ENCODE measurements at regions of chr6 and their contacts with region 1.

Region 1: GRCh38 chr6:90413867-90414266 is 117.2 kb upstream of the BACH2 start:
- DNase-seq: peak; percentile 96
- H3K4me3 Mint-ChIP-seq: peak overlapping the region; percentile 71
- H3K27ac Mint-ChIP-seq: peak overlapping the region; percentile 94
- H3K4me1 Mint-ChIP-seq: peaks cover 69% of the 10 kb centered on the region
- H3K27me3 Mint-ChIP-seq: no peaks in the 10 kb centered on the region

Region 2: DNA sequence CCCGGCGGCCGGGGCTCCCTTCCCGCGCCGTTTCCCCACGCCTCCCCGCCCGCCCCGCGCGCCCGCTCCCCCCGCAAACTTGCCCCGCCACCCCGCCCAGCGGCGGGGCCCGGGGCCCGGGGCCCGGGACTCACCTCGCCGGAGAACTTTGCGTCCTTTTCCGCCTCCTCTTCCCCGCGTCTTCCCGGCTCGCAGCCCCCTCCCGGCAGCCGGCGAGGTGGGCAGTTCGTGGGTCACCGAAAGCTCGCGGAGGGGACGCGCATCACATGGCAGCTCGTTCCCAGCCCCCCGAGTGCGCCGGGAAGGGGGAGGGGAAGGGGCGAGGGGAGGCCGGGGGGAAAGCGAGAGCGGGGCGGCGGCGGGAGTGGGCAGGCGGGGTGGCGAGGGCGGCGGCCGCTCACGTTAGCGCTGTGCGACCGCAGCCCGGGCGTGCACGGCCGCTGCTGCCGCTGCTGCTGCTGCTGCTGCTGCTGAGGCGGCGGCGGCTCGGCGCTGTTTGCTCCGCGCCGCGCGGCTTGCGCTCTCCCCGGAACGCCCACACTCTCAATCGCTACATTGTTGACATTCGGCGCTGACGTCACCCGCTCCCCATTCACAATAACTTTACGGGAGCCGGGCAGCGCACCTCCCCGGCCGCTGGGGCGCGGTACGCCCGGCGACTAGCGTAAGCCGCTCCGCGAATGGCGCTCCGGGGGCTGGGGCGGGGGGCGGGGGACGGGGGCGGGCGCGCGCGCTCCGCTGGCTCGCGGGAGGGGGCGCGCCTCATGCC is 117.3 kb before region 1 on chr6 and contains the start of gene BACH2:
- CTCF ChIA-PET with region 1: interaction called, 3 read pairs
- intact Hi-C with region 1: loop called (anchors 1 kb)
- DNase-seq: peak; percentile 99
- H3K4me3 Mint-ChIP-seq: peak within 1 kb of the TSS; percentile 86
- H3K27ac Mint-ChIP-seq: peak within 1 kb of the TSS; percentile 97
- H3K4me1 Mint-ChIP-seq: peaks cover 41% of the 10 kb centered on the region
- H3K27me3 Mint-ChIP-seq: peaks cover 2% of the 10 kb centered on the region
- total RNA-seq, gene BACH2: 75.1 to 77.9 TPM

Region 3: GRCh38 chr6:90319044-90319443 is 94.8 kb before region 1 on chr6:
- CTCF ChIA-PET with region 1: no interaction called
- intact Hi-C with region 1: loop called (anchors 1 kb)
- DNase-seq: peak; percentile 55
- H3K4me3 Mint-ChIP-seq: no peak overlapping the region
- H3K27ac Mint-ChIP-seq: peak overlapping the region; percentile 55
- H3K4me1 Mint-ChIP-seq: peaks cover 40% of the 10 kb centered on the region
- H3K27me3 Mint-ChIP-seq: no peaks in the 10 kb centered on the region

Region 4: DNA sequence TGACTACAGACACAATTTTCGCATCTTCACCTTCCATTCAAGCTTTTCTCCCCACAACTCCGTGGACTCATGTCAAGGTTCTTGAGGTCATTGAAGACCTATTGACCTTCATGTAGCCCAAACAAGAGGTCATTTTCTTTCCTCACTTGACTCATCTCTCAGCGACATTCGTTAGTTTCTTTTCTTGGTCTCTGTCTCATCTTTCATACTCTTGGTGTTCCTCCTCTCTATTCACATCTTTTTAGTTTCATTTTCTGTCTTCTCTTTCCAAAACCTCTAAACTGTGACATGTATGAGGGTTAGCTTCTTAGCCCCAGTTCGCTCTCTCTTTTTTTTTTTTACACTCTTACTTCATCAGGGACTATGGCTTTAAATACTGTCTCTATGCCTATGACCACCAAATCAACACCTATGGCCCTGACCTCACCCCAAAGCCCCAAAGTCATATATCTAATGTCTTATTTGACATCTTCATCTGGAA is 11.3 kb after region 1 on chr6:
- CTCF ChIA-PET with region 1: interaction called, 36 read pairs
- intact Hi-C with region 1: loop called (anchors 1 kb)
- DNase-seq: peak; percentile 46
- H3K4me3 Mint-ChIP-seq: peak overlapping the region; percentile 48
- H3K27ac Mint-ChIP-seq: peak overlapping the region; percentile 92
- H3K4me1 Mint-ChIP-seq: peaks cover 41% of the 10 kb centered on the region
- H3K27me3 Mint-ChIP-seq: no peaks in the 10 kb centered on the region

Region 5: GRCh38 chr6:90444160-90444714 is 30.4 kb after region 1 on chr6:
- CTCF ChIA-PET with region 1: interaction called, 4 read pairs
- intact Hi-C with region 1: loop called (anchors 1 kb)
- DNase-seq: no peak
- H3K4me3 Mint-ChIP-seq: peak overlapping the region; percentile 62
- H3K27ac Mint-ChIP-seq: peak overlapping the region; percentile 95
- H3K4me1 Mint-ChIP-seq: peaks cover 56% of the 10 kb centered on the region
- H3K27me3 Mint-ChIP-seq: no peaks in the 10 kb centered on the region

Region 6: DNA sequence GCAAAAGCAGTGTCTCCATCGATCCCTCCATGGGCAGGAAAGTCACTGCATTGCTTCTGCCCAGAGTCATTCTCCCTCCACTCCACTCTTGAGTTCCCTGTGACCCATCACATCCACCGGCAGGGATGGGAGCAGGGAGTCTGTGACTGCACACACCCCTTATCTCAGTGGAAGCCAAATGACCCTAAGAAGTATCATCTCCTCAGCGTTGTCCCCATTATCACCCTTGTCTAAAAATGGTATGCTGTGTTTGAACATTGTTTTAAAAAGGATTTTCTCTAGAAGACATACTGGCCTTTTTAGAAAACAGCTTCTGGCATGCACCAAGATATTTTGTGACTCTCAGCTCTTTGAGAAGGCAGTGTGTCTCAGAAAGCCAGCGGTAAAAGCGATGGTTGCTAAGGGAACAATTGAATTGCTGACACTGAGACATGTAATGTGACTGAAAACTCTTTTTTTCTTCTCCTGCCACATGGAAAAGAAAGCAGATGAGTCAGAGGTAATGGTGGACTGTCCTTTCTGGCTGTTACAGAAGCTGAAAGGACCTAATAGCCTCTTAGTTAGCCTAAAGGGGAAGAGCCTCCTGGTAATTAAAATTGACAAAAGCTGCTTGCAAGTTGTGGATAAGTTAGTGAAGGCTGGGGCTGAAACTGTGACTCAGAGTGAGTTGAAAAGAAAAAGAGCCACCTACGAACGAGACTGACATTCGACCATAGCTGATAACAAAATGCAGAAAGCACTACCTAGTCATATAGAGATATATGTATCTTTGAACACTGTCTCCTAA is 52.5 kb after region 1 on chr6:
- CTCF ChIA-PET with region 1: no interaction called
- intact Hi-C with region 1: loop called (anchors 1 kb)
- DNase-seq: peak; percentile 73
- H3K4me3 Mint-ChIP-seq: no peak overlapping the region
- H3K27ac Mint-ChIP-seq: peak overlapping the region; percentile 90
- H3K4me1 Mint-ChIP-seq: peaks cover 82% of the 10 kb centered on the region
- H3K27me3 Mint-ChIP-seq: no peaks in the 10 kb centered on the region

Region 7: DNA sequence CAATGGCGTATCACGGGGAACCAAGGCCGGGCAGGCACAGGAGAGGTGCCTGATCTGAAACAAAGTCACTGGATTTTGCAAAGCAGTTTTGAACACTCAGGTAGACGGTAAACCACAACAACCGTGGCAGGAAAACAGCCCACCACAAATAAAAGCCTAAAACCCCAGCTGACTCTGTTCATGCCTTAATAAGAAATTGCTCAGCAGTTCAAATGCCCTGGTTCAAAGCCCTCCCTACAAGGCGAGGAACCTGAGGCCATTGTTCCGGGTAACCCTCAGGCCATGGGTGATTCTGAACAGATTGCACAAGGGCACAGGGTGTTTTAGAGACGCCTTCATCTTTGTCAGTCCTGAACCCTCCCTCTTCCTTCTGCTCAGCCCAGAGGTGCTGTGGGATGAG is 58.9 kb after region 1 on chr6:
- CTCF ChIA-PET with region 1: interaction called, 10 read pairs
- intact Hi-C with region 1: loop called (anchors 1 kb)
- DNase-seq: peak; percentile 61
- H3K4me3 Mint-ChIP-seq: peak overlapping the region; percentile 48
- H3K27ac Mint-ChIP-seq: peak overlapping the region; percentile 92
- H3K4me1 Mint-ChIP-seq: peaks cover 86% of the 10 kb centered on the region
- H3K27me3 Mint-ChIP-seq: no peaks in the 10 kb centered on the region

Region 8: DNA sequence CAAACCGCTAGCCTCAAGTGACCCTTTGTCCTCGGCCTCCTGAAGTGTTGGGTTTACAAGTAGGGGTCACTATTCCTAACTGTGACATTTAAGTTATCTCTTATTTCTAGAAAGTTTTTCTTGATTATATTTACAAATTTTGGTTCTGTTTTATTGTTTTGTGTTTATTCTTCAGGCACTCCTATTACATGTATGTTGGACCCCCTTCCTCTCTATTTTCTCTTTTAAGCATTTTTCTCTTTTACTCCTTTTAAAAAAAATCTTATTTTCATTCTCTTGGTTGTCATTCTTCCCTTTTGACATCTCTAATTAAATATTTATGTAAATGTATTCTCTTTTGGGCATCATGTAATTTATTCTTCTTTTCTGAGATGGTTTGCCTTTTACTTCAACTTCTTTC is 223.5 kb after region 1 on chr6:
- CTCF ChIA-PET with region 1: no interaction called
- intact Hi-C with region 1: no loop called
- DNase-seq: no peak
- H3K4me3 Mint-ChIP-seq: no peak overlapping the region
- H3K27ac Mint-ChIP-seq: no peak overlapping the region
- H3K4me1 Mint-ChIP-seq: no peaks in the 10 kb centered on the region
- H3K27me3 Mint-ChIP-seq: peaks cover 13% of the 10 kb centered on the region